Common myeloid progenitor, CD34-positive (primary cell): ENCODE measurements at regions of chr5 and their contacts with region 1.

Region 1: GRCh38 chr5:16471387-16471786 is 5.8 kb upstream of the ZNF622 start:
- DNase-seq: no peak
- H3K4me3 ChIP-seq: no peak overlapping the region
- H3K27ac ChIP-seq: no peak overlapping the region
- H3K4me1 ChIP-seq: peaks cover 0 to 8% (median 3%) of the 10 kb centered on the region in 4 experiments
- H3K27me3 ChIP-seq: no peaks in the 10 kb centered on the region

Region 2: GRCh38 chr5:16483361-16483760 is 12.0 kb after region 1 on chr5:
- CTCF ChIA-PET with region 1: interaction called, 12 read pairs
- POLR2A ChIA-PET with region 1: no interaction called
- DNase-seq: no peak
- H3K4me3 ChIP-seq: no peak overlapping the region
- H3K27ac ChIP-seq: no peak overlapping the region
- H3K4me1 ChIP-seq: no peaks in the 10 kb centered on the region
- H3K27me3 ChIP-seq: no peaks in the 10 kb centered on the region